Colonic mucosa (tissue), 4 donors: ENCODE measurements at regions of chr11 and their contacts with region 1.

Region 1: DNA sequence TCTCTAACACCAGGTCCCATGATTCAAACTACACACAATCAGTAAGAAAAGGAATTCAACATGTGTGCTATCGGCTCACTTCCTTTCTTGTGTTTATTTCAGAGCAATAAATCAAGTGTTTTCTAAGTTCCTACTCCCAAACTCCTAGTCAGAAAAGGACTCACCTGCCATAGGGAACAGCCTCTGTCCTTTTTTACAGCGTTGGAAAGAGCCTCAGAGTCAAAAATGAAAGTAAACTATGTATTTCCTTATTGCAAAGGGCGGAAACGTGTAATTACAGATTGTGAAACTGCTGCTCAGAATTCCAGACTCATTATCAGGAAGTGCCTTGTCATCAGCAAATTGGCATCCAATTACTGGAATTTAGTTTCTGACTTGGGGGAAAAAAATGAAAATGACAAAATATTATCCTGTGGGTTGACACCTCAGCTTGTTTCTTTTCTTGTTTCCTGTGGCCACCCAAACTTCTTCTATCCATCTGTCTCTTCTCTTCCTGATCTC is at the start of gene CASP4:
- DNase-seq: peak; percentile 53
- H3K4me3 ChIP-seq: peak within 1 kb of the TSS; percentile 33
- H3K27ac ChIP-seq: peak within 1 kb of the TSS; percentile 93
- H3K4me1 ChIP-seq: peaks cover 5% of the 10 kb centered on the region
- H3K27me3 ChIP-seq: no peaks in the 10 kb centered on the region
- CTCF ChIP-seq: no peak
- total RNA-seq, gene CASP4: 27.6 to 29.8 TPM

Region 2: DNA sequence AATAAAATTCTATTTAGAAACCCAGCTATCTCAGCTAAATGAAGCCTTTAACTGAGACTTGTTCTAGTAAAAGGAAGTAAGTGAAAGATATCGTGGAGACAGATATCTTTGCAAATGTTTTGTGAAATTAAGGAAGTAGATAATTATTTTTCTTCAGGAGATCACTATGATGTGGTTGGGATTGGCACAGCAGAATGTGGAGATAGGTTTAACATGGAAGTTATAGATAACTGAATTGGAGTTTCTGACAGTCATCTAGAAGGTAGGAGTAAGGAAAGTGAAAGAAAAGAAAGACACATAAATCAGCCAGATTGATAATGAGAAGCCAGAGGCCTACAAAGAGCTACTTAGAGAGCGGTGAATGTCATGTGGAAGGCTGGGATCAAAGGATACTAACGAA is 59.3 kb after region 1 on chr11:
- intact Hi-C with region 1: loop called (anchors 2 kb)
- DNase-seq: no peak
- H3K4me3 ChIP-seq: no peak overlapping the region
- H3K27ac ChIP-seq: no peak overlapping the region
- H3K4me1 ChIP-seq: peaks cover 7% of the 10 kb centered on the region
- H3K27me3 ChIP-seq: no peaks in the 10 kb centered on the region
- CTCF ChIP-seq: no peak

Region 3: DNA sequence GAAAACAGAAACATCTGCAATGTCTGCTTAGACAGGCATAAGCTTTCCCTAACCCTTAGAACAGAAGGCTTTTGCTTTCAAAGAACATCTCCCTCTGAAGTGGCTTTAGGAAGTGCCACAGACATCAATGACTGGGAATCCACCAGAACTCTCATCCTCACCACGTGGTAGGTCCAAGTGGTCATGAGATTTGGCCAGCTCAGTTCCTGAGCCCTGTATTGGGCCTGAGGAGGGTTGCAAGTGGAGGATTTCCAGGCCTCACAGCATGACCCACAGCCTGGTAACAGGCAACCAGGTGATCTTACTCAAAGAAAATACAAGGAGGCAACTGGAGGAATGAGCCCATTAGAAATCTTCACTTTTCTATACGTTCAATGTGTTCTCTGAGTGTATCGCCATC is 64.9 kb after region 1 on chr11:
- intact Hi-C with region 1: loop called (anchors 2 kb)
- DNase-seq: no peak
- H3K4me3 ChIP-seq: peak overlapping the region; percentile 35
- H3K27ac ChIP-seq: peak overlapping the region; percentile 84
- H3K4me1 ChIP-seq: no peaks in the 10 kb centered on the region
- H3K27me3 ChIP-seq: no peaks in the 10 kb centered on the region
- CTCF ChIP-seq: no peak

Region 4: DNA sequence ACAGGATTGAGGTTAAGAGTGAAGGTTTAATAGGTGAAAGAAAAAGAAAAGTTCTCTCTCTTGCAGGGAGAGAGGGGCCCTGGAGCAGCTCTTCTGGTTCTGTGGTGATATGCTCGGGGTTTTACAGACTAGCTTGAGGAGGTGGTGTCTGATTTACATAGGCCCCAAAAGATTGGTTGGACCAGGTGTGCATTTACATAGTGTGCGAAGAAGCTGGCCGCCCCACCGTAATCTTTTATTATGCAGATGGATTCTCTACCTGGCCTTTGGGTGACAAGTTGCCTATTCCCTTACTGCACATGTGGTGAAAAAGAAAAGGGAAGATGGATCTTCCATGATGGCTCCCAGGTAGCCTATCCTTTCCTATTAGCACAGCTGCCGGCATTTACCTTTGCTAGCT is 421.5 kb after region 1 on chr11:
- intact Hi-C with region 1: no loop called
- DNase-seq: no peak
- H3K4me3 ChIP-seq: no peak overlapping the region
- H3K27ac ChIP-seq: no peak overlapping the region
- H3K4me1 ChIP-seq: no peaks in the 10 kb centered on the region
- H3K27me3 ChIP-seq: no peaks in the 10 kb centered on the region
- CTCF ChIP-seq: no peak